Mucosa of descending colon (tissue), 3 donors: ENCODE measurements at regions of chr7 and their contacts with region 1.

Region 1: GRCh38 chr7:100478966-100479665 is at the start of gene TSC22D4:
- DNase-seq: peak; percentile 94 to 98 (median 97)
- ATAC-seq: peak; percentile 92
- H3K4me3 ChIP-seq: peak within 1 kb of the TSS; percentile 67
- H3K4me1 ChIP-seq: peaks cover 40% of the 10 kb centered on the region
- CTCF ChIP-seq: no peak
- total RNA-seq, gene TSC22D4: 45.1 to 65.2 (median 64.8) TPM

Region 2: DNA sequence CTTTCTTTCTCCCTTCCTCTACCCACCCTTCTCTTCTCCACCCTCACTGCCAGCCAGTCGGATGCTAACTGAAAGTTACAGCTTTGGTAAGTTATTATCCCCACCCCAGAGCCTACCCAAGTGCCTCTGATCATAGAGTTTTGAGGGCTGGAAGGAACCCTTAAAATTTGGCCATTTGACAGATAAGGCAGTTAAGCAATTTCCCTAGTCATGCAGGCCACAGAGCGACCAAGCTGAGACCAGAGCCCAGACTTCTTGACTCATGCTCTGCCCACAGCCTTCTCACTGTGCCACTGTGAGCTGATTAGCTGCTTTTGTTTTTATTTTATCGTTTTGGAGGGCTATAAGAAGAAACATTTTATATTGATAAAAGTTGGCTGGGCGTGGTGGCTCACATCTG is 77.4 kb after region 1 on chr7:
- intact Hi-C with region 1: loop called in 1 of 2 experiments (anchors 10 kb)
- DNase-seq: no peak
- ATAC-seq: no peak
- H3K4me3 ChIP-seq: no peak overlapping the region
- H3K4me1 ChIP-seq: peaks cover 7% of the 10 kb centered on the region
- CTCF ChIP-seq: no peak

Region 3: DNA sequence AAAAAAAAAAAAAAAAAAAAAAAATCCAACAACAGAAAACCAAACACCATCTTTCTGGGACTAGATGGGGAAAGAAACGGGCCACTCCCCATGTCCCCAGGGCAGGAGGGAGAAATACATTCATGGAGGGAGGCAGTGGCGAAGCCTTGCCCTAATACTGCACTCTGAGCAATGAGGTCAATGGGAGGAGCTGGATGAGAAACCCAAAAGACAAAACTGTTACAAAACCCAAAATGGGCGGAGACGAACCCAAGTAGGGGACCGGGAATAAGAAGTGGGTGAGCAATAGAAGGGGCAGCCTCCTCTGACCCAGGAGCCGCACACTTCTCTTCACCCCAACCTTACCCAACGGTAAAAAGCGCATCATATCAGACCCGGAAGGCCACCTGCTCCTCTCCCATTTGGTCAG is 201.1 kb after region 1 on chr7:
- intact Hi-C with region 1: loop called in 1 of 2 experiments (anchors 10 kb)
- DNase-seq: peak in 1 of 3 donors; percentile 29
- ATAC-seq: no peak
- H3K4me3 ChIP-seq: no peak overlapping the region
- H3K4me1 ChIP-seq: no peaks in the 10 kb centered on the region
- CTCF ChIP-seq: no peak